ENCODE measurements at regions of chr16 and their contacts with region 1.

Region 1: DNA sequence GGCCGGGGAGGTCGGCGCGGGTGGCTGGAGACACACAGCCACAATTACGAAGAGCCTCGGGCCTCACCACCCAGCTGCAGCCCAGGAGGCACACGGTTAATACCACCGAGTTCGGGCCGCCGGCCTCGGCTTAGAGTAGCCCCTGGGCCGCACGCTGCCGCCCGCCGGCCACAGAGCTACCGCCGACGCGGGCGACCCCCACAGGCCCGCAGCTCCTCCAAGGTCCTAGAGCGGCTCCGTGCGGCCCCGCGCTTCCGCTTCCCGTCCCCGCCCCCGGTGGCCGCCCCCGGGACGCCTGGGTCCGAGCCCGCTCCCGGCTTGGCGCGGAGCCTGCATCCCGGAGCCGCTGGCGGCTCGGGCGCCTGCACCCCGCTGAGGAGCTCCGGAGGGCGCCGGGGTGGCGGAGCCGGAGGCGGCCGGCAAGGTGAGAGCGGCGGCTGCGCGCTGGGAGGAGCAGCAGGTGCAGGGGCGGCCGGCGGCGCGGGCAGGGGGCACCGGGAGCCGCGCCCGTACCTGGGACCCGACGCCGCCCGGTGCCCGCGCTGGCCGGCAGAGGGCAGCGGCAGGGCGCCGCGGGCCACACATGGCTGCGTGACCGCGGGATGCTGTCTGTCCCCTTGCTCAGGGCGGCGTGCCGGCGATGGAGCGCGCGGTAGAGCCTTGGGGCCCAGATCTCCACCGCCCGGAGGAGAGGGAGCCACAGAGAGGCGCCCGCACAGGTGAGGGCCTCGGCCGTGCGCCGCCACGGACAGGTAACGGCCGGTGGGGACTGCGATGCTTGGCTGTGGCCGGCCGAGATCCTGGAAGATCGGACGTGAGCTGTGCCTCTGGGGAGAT is at the start of gene ZNF48:
- DNase-seq: peak; percentile 87 to 91
- H3K4me3 ChIP-seq: peak within 1 kb of the TSS; percentile 88
- H3K4me3 Mint-ChIP-seq: peak within 1 kb of the TSS; percentile 82
- H3K27ac Mint-ChIP-seq: peak within 1 kb of the TSS; percentile 46
- H3K4me1 ChIP-seq: peaks cover 6% of the 10 kb centered on the region; the same call in 1 of the 2 replicates
- H3K4me1 Mint-ChIP-seq: peaks cover 19% of the 10 kb centered on the region
- H3K27me3 ChIP-seq: no peaks in the 10 kb centered on the region
- H3K27me3 Mint-ChIP-seq: no peaks in the 10 kb centered on the region
- CTCF ChIP-seq: peak in 1 of 2 experiments; percentile 40
- total RNA-seq, gene ZNF48: 12.8 and 13.4 TPM in 2 replicates

Region 2: GRCh38 chr16:30417529-30418349 is 22.4 kb after region 1 on chr16:
- CTCF ChIA-PET with region 1: interaction called, 16 read pairs
- POLR2A ChIA-PET with region 1: interaction called, 20 read pairs
- intact Hi-C with region 1: no loop called
- DNase-seq: peak; percentile 89 to 91
- H3K4me3 ChIP-seq: peak overlapping the region; percentile 93
- H3K4me3 Mint-ChIP-seq: peak overlapping the region; percentile 60
- H3K27ac Mint-ChIP-seq: no peak overlapping the region
- H3K4me1 ChIP-seq: peaks cover 11% of the 10 kb centered on the region; the same call in 1 of the 2 replicates
- H3K4me1 Mint-ChIP-seq: peaks cover 16% of the 10 kb centered on the region
- H3K27me3 ChIP-seq: no peaks in the 10 kb centered on the region
- H3K27me3 Mint-ChIP-seq: no peaks in the 10 kb centered on the region
- CTCF ChIP-seq: peak in 1 of 2 experiments; percentile 41

Region 3: DNA sequence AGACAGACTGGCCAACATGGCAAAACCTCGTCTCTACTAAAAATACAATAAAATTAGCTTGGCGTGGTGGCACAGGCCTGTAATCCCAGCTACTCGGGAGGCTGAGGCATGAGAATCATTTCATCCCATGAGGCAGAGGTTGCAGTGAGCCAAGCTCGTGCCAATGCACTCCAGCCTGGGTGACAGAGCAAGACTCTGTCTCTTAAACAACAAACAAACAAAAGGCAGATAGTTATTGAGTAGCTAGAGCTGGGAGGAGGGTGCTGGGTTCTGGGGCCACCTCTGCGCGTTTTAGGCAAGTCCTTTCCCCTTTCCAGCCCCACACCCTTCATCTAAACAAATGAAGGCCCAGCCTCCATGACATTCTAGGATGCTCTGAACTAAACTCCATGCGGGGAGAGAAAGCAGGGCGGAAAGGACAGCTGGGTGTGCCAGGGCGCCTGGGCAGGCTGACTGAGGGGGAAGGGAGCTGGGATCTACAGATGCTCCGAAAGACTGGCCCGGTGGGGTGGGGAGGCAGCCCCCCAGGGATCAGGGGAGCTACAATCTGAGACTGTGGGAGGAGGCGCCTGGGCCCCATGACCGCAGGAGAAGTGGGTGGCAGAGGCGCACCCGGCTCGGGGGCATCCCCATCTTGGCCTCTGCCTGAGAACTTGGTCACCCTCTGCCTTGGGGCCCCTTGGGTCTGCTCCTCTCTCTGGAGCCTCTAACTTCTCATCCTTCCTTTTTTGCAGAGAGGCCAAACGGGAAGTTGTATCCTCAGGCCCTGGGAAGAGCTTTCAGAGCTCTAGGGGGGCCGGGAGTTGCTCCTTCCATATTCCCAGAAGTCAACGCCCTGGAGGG is 78.1 kb after region 1 on chr16:
- CTCF ChIA-PET with region 1: no interaction called
- POLR2A ChIA-PET with region 1: no interaction called
- intact Hi-C with region 1: no loop called
- DNase-seq: no peak
- H3K4me3 ChIP-seq: no peak overlapping the region
- H3K4me3 Mint-ChIP-seq: no peak overlapping the region
- H3K27ac Mint-ChIP-seq: peak overlapping the region; percentile 43
- H3K4me1 ChIP-seq: no peaks in the 10 kb centered on the region
- H3K4me1 Mint-ChIP-seq: no peaks in the 10 kb centered on the region
- H3K27me3 ChIP-seq: no peaks in the 10 kb centered on the region
- H3K27me3 Mint-ChIP-seq: no peaks in the 10 kb centered on the region
- CTCF ChIP-seq: no peak

Region 4: DNA sequence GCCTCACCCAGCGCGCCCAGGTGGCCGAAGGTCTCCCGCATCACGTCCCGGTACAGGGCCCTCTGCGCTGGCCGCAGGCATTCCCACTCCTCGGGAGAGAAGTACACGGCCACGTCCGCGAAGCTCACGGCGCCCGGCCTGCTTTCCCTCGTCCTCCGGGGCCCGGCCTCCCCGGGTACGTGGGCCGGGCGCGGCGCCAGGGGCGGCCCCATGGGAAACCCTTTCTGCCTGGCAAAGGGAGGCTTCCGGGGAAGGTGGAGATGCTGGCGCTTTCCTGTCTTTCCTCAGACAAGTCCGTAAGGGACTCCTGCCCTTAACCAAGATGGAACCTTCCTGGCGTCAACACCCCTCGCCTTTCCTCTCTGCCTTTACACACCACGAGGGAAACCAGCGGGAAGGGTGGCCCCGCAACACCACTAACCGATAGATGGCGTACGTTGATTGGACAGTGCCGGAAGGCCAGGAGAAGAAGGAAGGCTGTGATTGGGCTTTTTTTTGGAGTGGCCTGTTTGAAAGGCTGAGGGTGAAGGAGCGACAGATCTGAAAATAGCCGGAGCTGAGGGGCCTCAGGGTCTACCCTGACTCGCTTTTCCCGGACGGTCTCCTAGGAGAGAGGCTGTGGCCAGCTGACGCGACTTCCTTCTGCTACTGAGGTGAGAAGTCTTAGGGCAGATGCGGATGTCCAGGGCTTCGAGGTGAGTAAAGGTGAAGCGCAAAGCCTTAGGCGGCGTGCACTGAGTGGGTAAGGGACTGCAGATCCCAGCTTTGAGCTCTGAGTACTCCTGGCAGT is 190.2 kb after region 1 on chr16 and contains the start of gene ZNF785:
- CTCF ChIA-PET with region 1: no interaction called
- POLR2A ChIA-PET with region 1: interaction called, 10 read pairs
- intact Hi-C with region 1: no loop called
- DNase-seq: peak; percentile 96 to 98
- H3K4me3 ChIP-seq: peak within 1 kb of the TSS; percentile 69
- H3K4me3 Mint-ChIP-seq: peak within 1 kb of the TSS; percentile 91
- H3K27ac Mint-ChIP-seq: peak within 1 kb of the TSS; percentile 91
- H3K4me1 ChIP-seq: no peaks in the 10 kb centered on the region
- H3K4me1 Mint-ChIP-seq: no peaks in the 10 kb centered on the region
- H3K27me3 ChIP-seq: no peaks in the 10 kb centered on the region
- H3K27me3 Mint-ChIP-seq: no peaks in the 10 kb centered on the region
- CTCF ChIP-seq: peak in 1 of 2 experiments; percentile 7
- total RNA-seq, gene ZNF785: 13.5 and 13.6 TPM in 2 replicates

Measured in Caco-2 (cell line).